Astrocyte of the cerebellum (primary cell): ENCODE measurements at regions of chr15 and their contacts with region 1.

Region 1: DNA sequence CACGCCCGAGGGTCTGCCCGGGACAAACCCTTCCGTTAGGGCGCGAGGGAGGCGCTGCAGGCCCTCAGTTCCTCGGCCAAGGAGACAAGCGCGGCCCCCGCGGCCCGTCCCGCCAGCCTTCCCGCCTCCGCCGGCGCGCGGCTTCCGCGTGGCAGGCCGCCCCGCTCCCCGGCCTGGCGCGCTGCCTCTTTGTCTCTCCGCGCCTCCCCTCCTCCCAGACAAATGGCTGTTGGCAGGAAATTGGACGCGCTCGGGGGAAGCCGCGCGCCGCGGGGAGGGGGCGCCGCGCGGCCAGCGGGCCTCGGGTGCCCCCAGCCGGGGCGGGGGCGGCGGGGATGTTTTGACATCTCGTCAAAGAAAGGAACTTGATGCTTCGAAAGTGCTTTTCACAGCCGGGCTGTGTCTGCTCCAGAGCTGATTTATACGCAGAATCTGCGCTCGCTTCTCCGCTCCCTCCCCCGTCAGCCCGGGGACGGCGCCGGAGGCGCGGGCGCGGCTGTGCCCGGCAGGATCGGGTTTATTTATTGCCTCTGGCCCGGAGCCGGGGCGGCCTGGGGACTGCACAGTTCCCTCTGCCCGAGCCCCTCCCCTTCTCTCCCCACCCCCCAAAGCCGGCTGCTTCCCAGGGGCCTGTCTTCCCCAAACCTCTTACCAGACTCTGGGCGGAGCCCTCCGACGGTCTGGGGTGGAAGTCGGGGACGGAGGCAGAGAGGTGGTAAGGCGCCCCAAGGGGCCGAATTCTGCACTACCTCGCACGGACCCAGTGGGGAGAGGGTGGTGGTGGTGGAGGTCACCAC is 20.7 kb downstream of the SHF start:
- DNase-seq: peak; percentile 36
- H3K4me3 ChIP-seq: peak overlapping the region; percentile 42
- CTCF ChIP-seq: peak; percentile 56

Region 2: DNA sequence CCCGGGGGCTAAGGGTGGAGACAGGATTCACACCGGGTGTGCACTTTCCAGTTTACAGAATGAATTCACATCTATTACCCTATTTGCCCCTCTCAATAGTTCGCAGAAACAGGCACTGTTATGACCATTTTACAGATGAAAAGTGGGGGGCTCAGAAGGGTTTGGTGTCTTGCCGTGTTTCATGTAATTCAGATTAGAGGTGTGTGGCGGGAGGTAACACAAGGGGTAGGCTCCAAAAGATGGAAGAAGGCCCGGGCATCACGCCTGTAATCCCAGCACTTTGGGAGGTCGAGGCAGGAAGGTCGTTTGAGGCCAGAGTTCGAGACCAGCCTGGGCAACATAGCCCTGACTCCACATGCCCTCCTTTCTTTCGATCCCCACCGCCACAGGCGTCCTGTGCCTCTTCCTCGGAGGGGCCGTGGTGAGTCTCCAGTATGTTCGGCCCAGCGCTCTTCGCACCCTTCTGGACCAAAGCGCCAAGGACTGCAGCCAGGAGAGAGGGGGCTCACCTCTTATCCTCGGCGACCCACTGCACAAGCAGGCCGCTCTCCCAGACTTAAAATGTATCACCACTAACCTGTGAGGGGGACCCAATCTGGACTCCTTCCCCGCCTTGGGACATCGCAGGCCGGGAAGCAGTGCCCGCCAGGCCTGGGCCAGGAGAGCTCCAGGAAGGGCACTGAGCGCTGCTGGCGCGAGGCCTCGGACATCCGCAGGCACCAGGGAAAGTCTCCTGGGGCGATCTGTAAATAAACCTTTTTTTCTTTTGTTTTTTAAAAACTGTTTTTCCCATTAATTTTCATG is 49.5 kb before region 1 on chr15:
- in situ Hi-C with region 1: no loop called
- DNase-seq: no peak
- H3K4me3 ChIP-seq: no peak overlapping the region
- CTCF ChIP-seq: no peak

Region 3: DNA sequence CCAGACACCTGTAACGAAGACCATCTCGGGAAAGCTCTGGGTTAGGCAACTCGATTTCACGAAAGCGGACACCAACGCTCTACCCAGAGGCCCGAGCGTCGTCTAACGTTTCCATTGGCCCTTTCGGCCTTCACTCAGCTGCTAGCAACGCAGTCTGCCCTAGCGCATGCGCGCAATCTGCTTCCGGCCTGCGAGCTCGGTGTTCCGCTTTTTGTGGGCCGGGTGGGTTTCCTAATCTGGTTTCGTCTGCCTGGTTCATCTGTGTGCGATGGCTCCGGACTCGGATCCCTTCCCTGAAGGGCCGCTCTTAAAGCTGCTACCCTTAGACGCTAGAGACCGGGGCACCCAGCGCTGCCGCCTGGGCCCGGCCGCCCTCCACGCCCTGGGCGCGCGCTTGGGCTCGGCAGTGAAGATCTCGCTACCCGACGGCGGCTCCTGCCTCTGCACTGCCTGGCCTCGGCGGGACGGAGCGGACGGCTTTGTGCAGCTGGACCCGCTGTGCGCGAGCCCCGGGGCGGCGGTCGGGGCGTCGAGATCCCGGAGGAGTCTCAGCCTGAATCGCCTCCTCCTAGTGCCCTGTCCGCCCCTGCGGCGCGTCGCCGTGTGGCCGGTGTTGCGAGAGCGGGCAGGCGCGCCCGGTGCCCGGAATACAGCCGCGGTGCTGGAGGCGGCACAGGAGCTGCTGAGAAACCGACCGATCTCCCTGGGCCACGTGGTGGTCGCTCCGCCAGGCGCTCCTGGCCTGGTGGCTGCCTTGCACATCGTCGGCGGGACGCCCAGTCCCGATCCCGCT is 235.3 kb after region 1 on chr15:
- in situ Hi-C with region 1: loop called (anchors 10 kb)
- DNase-seq: peak; percentile 97
- H3K4me3 ChIP-seq: peak overlapping the region; percentile 88
- CTCF ChIP-seq: no peak